ENCODE measurements at regions of chr7 and their contacts with region 1.

Region 1: GRCh38 chr7:3065724-3066143 is 22.1 kb upstream of the CARD11 start:
- DNase-seq: peak; percentile 56 to 71 (median 60)
- H3K4me3 ChIP-seq: no peak overlapping the region
- H3K4me3 Mint-ChIP-seq: peak overlapping the region; percentile 17 to 90 (median 78)
- H3K27ac ChIP-seq: peak overlapping the region; percentile 14
- H3K27ac Mint-ChIP-seq: peak overlapping the region; percentile 72 to 98 (median 90)
- H3K4me1 ChIP-seq: peaks cover 81% of the 10 kb centered on the region
- H3K4me1 Mint-ChIP-seq: peaks cover 57 to 89% (median 71%) of the 10 kb centered on the region in 4 donors
- H3K27me3 ChIP-seq: no peaks in the 10 kb centered on the region
- H3K27me3 Mint-ChIP-seq: no peaks in the 10 kb centered on the region

Region 2: DNA sequence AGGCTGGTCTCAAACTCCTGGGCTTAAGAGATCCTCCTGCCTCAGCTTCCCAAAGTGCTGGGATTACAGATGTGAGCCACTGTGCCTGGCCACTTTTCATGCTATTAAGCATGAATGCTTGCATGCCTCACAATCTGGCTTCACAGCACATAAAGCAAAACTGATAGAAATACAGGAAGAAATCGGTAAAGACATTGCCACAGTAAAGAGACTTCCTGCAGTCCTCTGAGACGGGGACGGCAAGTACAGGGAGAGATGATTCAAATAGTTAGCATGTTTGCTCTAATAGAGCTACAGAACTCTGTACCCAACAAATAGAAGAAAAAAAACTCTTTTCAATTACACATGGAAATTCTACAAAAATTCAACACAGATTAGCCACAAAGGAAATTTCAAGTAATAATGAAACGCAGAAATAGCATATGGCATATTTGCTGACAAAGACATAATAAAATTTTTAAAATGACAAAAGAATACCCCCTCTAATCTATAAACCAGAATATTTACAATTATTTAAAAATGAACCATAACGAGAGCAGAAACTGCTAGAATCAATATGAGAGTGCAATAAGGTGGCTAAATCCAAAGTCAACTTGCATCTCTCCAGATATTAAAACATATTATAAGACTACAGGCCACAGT is 54.4 kb before region 1 on chr7:
- CTCF ChIA-PET with region 1: interaction called, 7 read pairs
- POLR2A ChIA-PET with region 1: interaction called, 3 read pairs
- intact Hi-C with region 1: loop called (anchors 2 kb)
- DNase-seq: peak in 1 of 5 donors; percentile 8
- H3K4me3 ChIP-seq: no peak overlapping the region
- H3K4me3 Mint-ChIP-seq: peak overlapping the region in 7 of 8 donors; percentile 53 to 78 (median 73)
- H3K27ac ChIP-seq: no peak overlapping the region
- H3K27ac Mint-ChIP-seq: peak overlapping the region; percentile 32 to 88 (median 61)
- H3K4me1 ChIP-seq: peaks cover 52% of the 10 kb centered on the region
- H3K4me1 Mint-ChIP-seq: peaks cover 57 to 95% (median 76%) of the 10 kb centered on the region in 4 donors
- H3K27me3 ChIP-seq: no peaks in the 10 kb centered on the region
- H3K27me3 Mint-ChIP-seq: no peaks in the 10 kb centered on the region

Region 3: GRCh38 chr7:3092468-3092867 is 26.7 kb after region 1 on chr7:
- CTCF ChIA-PET with region 1: interaction called, 164 read pairs
- POLR2A ChIA-PET with region 1: interaction called, 116 read pairs
- intact Hi-C with region 1: loop called (anchors 2 kb)
- DNase-seq: peak; percentile 78 to 91 (median 82)
- H3K4me3 ChIP-seq: no peak overlapping the region
- H3K4me3 Mint-ChIP-seq: peak overlapping the region; percentile 38 to 80 (median 71)
- H3K27ac ChIP-seq: peak overlapping the region; percentile 70
- H3K27ac Mint-ChIP-seq: peak overlapping the region; percentile 92 to 97 (median 95)
- H3K4me1 ChIP-seq: peaks cover 79% of the 10 kb centered on the region
- H3K4me1 Mint-ChIP-seq: peaks cover 47 to 86% (median 66%) of the 10 kb centered on the region in 4 donors
- H3K27me3 ChIP-seq: no peaks in the 10 kb centered on the region
- H3K27me3 Mint-ChIP-seq: no peaks in the 10 kb centered on the region

Region 4: DNA sequence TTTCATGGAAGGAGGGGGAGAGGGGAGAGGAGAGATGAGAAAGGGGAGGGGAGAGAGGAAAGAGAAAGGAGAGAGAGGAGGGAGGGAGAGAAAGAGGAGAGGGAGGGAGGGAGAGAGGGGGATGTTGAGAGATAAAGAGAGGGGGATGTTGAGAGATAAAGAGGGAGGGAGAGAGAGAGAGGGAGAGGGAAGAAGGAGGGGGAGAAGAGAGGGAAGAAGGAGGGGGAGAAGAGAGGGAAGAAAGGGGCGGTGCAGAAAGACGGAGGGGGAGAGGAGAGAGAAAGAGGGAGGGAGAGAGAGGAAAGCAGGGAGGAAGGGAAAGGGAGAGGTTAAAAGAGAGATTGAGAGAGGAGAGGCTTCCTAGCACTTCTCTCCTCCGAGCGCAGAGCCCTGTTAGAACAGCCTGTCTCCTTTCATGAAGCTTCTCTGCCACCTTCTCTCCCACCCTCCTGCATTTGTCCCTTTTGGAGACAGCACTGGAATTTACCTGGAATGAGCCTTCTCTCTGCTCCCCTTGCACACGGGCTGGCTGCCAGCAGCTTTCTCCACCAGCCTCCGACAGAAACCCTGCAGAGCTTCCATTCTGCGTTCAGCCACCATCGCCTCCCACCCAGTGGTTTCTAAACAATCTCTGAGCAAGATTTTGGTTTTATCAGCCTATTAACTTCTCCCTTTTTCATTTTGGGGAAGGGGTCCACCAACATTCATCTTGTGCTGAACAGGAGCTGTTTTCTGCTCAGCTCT is 51.9 kb after region 1 on chr7:
- CTCF ChIA-PET with region 1: interaction called, 12 read pairs
- POLR2A ChIA-PET with region 1: interaction called, 13 read pairs
- intact Hi-C with region 1: loop called (anchors 2 kb)
- DNase-seq: peak in 3 of 5 donors; percentile 13 to 42 (median 33)
- H3K4me3 ChIP-seq: peak overlapping the region in 1 of 2 donors; percentile 22
- H3K4me3 Mint-ChIP-seq: peak overlapping the region in 7 of 8 donors; percentile 83 to 98 (median 90)
- H3K27ac ChIP-seq: no peak overlapping the region
- H3K27ac Mint-ChIP-seq: peak overlapping the region in 6 of 7 donors; percentile 84 to 96 (median 90)
- H3K4me1 ChIP-seq: peaks cover 64% of the 10 kb centered on the region
- H3K4me1 Mint-ChIP-seq: peaks cover 43 to 88% (median 58%) of the 10 kb centered on the region in 4 donors
- H3K27me3 ChIP-seq: no peaks in the 10 kb centered on the region
- H3K27me3 Mint-ChIP-seq: peaks cover 0 to 2% of the 10 kb centered on the region in 2 donors

Region 5: GRCh38 chr7:3300651-3301378 is 235.1 kb after region 1 on chr7 and contains the start of gene SDK1:
- CTCF ChIA-PET with region 1: interaction called, 5 read pairs
- POLR2A ChIA-PET with region 1: no interaction called
- intact Hi-C with region 1: loop called (anchors 5 kb)
- DNase-seq: peak; percentile 84 to 93 (median 91)
- H3K4me3 ChIP-seq: peak within 1 kb of the TSS; percentile 28 to 39
- H3K4me3 Mint-ChIP-seq: peak within 1 kb of the TSS; percentile 84 to 94 (median 87)
- H3K27ac ChIP-seq: no peak within 1 kb of the TSS
- H3K27ac Mint-ChIP-seq: peak within 1 kb of the TSS in 2 of 7 donors; percentile 53 to 92
- H3K4me1 ChIP-seq: peaks cover 18% of the 10 kb centered on the region
- H3K4me1 Mint-ChIP-seq: peaks cover 8 to 11% (median 9%) of the 10 kb centered on the region in 4 donors
- H3K27me3 ChIP-seq: peaks cover 4% of the 10 kb centered on the region
- H3K27me3 Mint-ChIP-seq: peaks cover 6 to 15% of the 10 kb centered on the region in 2 donors
- total RNA-seq, gene SDK1: 0.06 to 0.26 TPM

Region 6: DNA sequence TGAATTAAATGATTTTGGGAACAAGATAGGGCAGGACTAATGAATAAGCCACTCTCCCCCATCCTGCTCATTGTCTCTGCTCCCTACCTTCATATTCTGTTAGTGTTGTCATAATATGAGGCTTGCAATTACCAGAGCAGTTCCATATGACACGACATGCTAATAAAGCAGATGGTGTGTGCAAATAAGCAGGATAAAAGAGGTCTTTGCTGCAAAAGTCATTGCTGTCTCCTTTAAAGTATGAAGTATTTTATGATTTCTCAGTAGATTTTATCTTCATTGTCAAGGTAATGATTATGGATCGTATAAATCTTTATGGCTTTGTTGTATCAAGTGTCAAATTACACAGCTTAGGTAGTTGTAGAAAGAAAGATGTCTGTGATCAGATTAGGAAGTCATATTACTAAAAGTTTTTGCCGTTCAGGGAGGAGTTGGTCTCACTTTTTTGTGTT is 350.2 kb after region 1 on chr7:
- CTCF ChIA-PET with region 1: no interaction called
- POLR2A ChIA-PET with region 1: no interaction called
- intact Hi-C with region 1: no loop called
- DNase-seq: no peak
- H3K4me3 ChIP-seq: no peak overlapping the region
- H3K4me3 Mint-ChIP-seq: no peak overlapping the region
- H3K27ac ChIP-seq: no peak overlapping the region
- H3K27ac Mint-ChIP-seq: no peak overlapping the region
- H3K4me1 ChIP-seq: no peaks in the 10 kb centered on the region
- H3K4me1 Mint-ChIP-seq: no peaks in the 10 kb centered on the region
- H3K27me3 ChIP-seq: no peaks in the 10 kb centered on the region
- H3K27me3 Mint-ChIP-seq: peaks cover 16 to 18% of the 10 kb centered on the region in 2 donors